GM12878 (cell line): ENCODE measurements at regions of chr12 and their contacts with region 1.

Region 1: DNA sequence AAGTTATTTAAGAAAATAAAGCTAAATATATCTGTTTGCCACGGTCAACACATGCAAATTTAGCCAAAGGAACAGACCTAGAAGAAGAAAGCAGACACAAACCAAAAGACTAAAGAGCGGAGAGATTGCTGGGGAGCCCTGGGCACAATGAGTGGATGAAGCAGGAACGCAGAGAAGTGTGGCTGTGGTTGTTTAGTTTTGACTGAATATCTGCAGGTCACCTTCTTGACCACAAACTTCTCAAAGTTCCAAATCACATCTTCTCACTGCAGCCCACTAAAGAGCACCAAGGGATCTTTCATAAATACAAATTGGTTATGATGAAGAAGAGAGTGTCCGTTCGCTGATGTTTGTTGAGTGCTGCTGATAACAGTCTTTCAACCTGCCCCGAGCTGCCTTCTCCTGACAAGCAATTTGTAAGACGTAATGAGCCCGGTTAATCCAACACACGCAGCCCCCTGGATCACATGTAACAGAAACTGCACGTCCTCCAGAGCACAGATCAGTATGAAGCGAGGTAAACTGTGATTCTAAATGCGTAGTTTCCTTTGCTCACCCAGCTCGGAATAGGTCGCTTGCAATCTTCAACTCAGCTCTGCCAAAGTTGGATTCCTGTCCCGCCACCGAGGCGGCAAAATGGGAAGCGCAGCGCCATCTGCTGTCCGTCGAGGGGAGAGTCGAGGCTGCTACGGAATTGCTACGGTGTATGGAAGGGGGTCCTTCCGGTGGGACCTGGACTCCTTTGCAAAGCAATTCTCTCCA is 120.8 kb downstream of the GXYLT1 start:
- DNase-seq: peak; percentile 21
- ATAC-seq: peak; percentile 95
- H3K4me3 ChIP-seq: no peak overlapping the region
- H3K27ac ChIP-seq: no peak overlapping the region
- H3K4me1 ChIP-seq: peaks cover 4% of the 10 kb centered on the region; the same call in 1 of the 2 replicates
- H3K27me3 ChIP-seq: no peaks in the 10 kb centered on the region
- CTCF ChIP-seq: peak; percentile 90 to 92 (median 91)
- EP300 ChIP-seq: no peak
- POLR2A ChIP-seq: no peak
- RAD21 ChIP-seq: peak; percentile 88

Region 2: DNA sequence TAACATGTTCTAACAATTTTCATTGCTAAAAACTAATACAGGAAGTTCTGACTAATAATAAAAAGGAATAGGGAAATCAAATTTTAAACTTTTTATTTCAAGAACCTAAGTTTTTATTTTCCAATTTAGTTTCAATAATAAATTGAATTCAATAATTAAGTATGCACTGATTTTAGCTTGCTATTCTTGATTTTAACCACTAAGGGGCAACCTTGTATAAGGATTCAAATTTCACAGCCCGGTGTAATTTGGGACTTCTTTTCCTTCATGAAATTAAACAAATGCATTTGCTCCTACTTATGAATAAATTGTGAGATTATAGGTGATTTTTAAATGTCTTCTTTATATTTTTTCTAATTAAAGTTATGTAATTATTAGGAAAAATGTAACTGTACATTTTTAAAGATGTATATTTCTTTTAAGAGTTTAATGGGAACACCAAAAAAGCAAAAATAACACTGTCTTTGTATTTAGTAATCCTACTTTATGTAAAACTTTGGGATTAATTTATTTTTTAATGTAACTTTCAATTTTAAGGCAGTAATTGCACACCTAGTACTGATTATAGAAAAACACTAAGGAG is 1077.2 kb before region 1 on chr12:
- CTCF ChIA-PET with region 1: interaction called, 25 read pairs
- POLR2A ChIA-PET with region 1: no interaction called
- RAD21 ChIA-PET with region 1: interaction called, 11 read pairs
- SMC1A ChIA-PET with region 1: interaction called, 7 read pairs
- in situ Hi-C with region 1: loop called (anchors 5 kb)
- intact Hi-C with region 1: loop called (anchors 2 kb)
- DNase-seq: no peak
- ATAC-seq: no peak
- H3K4me3 ChIP-seq: no peak overlapping the region
- H3K27ac ChIP-seq: no peak overlapping the region
- H3K4me1 ChIP-seq: no peaks in the 10 kb centered on the region
- H3K27me3 ChIP-seq: no peaks in the 10 kb centered on the region
- CTCF ChIP-seq: peak; percentile 28 to 56 (median 53); a peak in 5 of 6 replicates
- EP300 ChIP-seq: no peak
- POLR2A ChIP-seq: no peak
- RAD21 ChIP-seq: peak; percentile 76

Region 3: GRCh38 chr12:41264281-41264680 is 759.6 kb before region 1 on chr12:
- CTCF ChIA-PET with region 1: interaction called, 18 read pairs
- POLR2A ChIA-PET with region 1: no interaction called
- RAD21 ChIA-PET with region 1: interaction called, 3 read pairs
- SMC1A ChIA-PET with region 1: interaction called, 7 read pairs
- in situ Hi-C with region 1: no loop called
- intact Hi-C with region 1: no loop called
- DNase-seq: no peak
- ATAC-seq: peak; percentile 54; the same call in 2 of the 3 replicates
- H3K4me3 ChIP-seq: no peak overlapping the region
- H3K27ac ChIP-seq: no peak overlapping the region
- H3K4me1 ChIP-seq: no peaks in the 10 kb centered on the region
- H3K27me3 ChIP-seq: no peaks in the 10 kb centered on the region
- CTCF ChIP-seq: peak in 2 of 3 experiments; percentile 4 to 19; a peak in 1 of 6 replicates
- EP300 ChIP-seq: no peak
- POLR2A ChIP-seq: no peak
- RAD21 ChIP-seq: peak; percentile 37

Region 4: GRCh38 chr12:41277116-41277945 is 746.6 kb before region 1 on chr12:
- CTCF ChIA-PET with region 1: interaction called, 98 read pairs
- POLR2A ChIA-PET with region 1: no interaction called
- RAD21 ChIA-PET with region 1: interaction called, 24 read pairs
- SMC1A ChIA-PET with region 1: interaction called, 37 read pairs
- in situ Hi-C with region 1: loop called (anchors 5 kb)
- intact Hi-C with region 1: loop called (anchors 1 kb)
- DNase-seq: no peak
- ATAC-seq: peak; percentile 64; the same call in 2 of the 3 replicates
- H3K4me3 ChIP-seq: no peak overlapping the region
- H3K27ac ChIP-seq: no peak overlapping the region
- H3K4me1 ChIP-seq: no peaks in the 10 kb centered on the region
- H3K27me3 ChIP-seq: no peaks in the 10 kb centered on the region
- CTCF ChIP-seq: peak; percentile 52 to 81 (median 54)
- EP300 ChIP-seq: no peak
- POLR2A ChIP-seq: no peak
- RAD21 ChIP-seq: peak; percentile 85

Region 5: GRCh38 chr12:41514907-41515306 is 509.0 kb before region 1 on chr12:
- CTCF ChIA-PET with region 1: no interaction called
- POLR2A ChIA-PET with region 1: no interaction called
- RAD21 ChIA-PET with region 1: no interaction called
- SMC1A ChIA-PET with region 1: no interaction called
- in situ Hi-C with region 1: no loop called
- intact Hi-C with region 1: loop called (anchors 10 kb)
- DNase-seq: no peak
- ATAC-seq: peak; percentile 49; the same call in 1 of the 3 replicates
- H3K4me3 ChIP-seq: no peak overlapping the region
- H3K27ac ChIP-seq: no peak overlapping the region
- H3K4me1 ChIP-seq: no peaks in the 10 kb centered on the region
- H3K27me3 ChIP-seq: no peaks in the 10 kb centered on the region
- CTCF ChIP-seq: peak in 1 of 3 experiments; percentile 30; a peak in 2 of 6 replicates
- EP300 ChIP-seq: no peak
- POLR2A ChIP-seq: no peak
- RAD21 ChIP-seq: peak; percentile 24; the same call in 1 of the 2 replicates

Region 6: GRCh38 chr12:41821605-41822004 is 202.3 kb before region 1 on chr12:
- CTCF ChIA-PET with region 1: no interaction called
- POLR2A ChIA-PET with region 1: no interaction called
- RAD21 ChIA-PET with region 1: no interaction called
- SMC1A ChIA-PET with region 1: no interaction called
- in situ Hi-C with region 1: no loop called
- intact Hi-C with region 1: no loop called
- DNase-seq: no peak
- ATAC-seq: no peak
- H3K4me3 ChIP-seq: no peak overlapping the region
- H3K27ac ChIP-seq: no peak overlapping the region
- H3K4me1 ChIP-seq: no peaks in the 10 kb centered on the region
- H3K27me3 ChIP-seq: no peaks in the 10 kb centered on the region
- CTCF ChIP-seq: no peak
- EP300 ChIP-seq: no peak
- POLR2A ChIP-seq: no peak
- RAD21 ChIP-seq: no peak

Region 7: GRCh38 chr12:41992022-41992421 is 31.9 kb before region 1 on chr12:
- CTCF ChIA-PET with region 1: interaction called, 13 read pairs
- POLR2A ChIA-PET with region 1: no interaction called
- RAD21 ChIA-PET with region 1: no interaction called
- SMC1A ChIA-PET with region 1: interaction called, 3 read pairs
- in situ Hi-C with region 1: no loop called
- intact Hi-C with region 1: no loop called
- DNase-seq: no peak
- ATAC-seq: no peak
- H3K4me3 ChIP-seq: no peak overlapping the region
- H3K27ac ChIP-seq: no peak overlapping the region
- H3K4me1 ChIP-seq: no peaks in the 10 kb centered on the region
- H3K27me3 ChIP-seq: no peaks in the 10 kb centered on the region
- CTCF ChIP-seq: no peak
- EP300 ChIP-seq: no peak
- POLR2A ChIP-seq: no peak
- RAD21 ChIP-seq: no peak

Region 8: GRCh38 chr12:42332301-42333285 is 308.7 kb after region 1 on chr12:
- CTCF ChIA-PET with region 1: interaction called, 12 read pairs
- POLR2A ChIA-PET with region 1: no interaction called
- RAD21 ChIA-PET with region 1: interaction called, 6 read pairs
- SMC1A ChIA-PET with region 1: interaction called, 24 read pairs
- in situ Hi-C with region 1: no loop called
- intact Hi-C with region 1: loop called (anchors 10 kb)
- DNase-seq: no peak
- ATAC-seq: peak; percentile 81
- H3K4me3 ChIP-seq: no peak overlapping the region
- H3K27ac ChIP-seq: no peak overlapping the region
- H3K4me1 ChIP-seq: peaks cover 2% of the 10 kb centered on the region
- H3K27me3 ChIP-seq: no peaks in the 10 kb centered on the region
- CTCF ChIP-seq: peak; percentile 50 to 67 (median 53)
- EP300 ChIP-seq: no peak
- POLR2A ChIP-seq: no peak
- RAD21 ChIP-seq: peak; percentile 88